ENCODE measurements at regions of chr10 and their contacts with region 1.

Region 1: GRCh38 chr10:87861953-87862678 is 1.2 kb downstream of the KLLN start:
- DNase-seq: peak; percentile 85 to 97 (median 91)
- ATAC-seq: peak; percentile 67 to 73 (median 68)
- H3K4me3 ChIP-seq: peak overlapping the region; percentile 71 to 97
- H3K4me3 Mint-ChIP-seq: peak overlapping the region; percentile 94 to 97 (median 95)
- H3K27ac ChIP-seq: peak overlapping the region; percentile 87
- H3K27ac Mint-ChIP-seq: peak overlapping the region; percentile 92 to 95
- H3K4me1 ChIP-seq: peaks cover 11 to 17% of the 10 kb centered on the region in 2 experiments
- H3K4me1 Mint-ChIP-seq: peaks cover 33 to 58% (median 35%) of the 10 kb centered on the region in 3 donors
- H3K27me3 ChIP-seq: no peaks in the 10 kb centered on the region
- H3K27me3 Mint-ChIP-seq: no peaks in the 10 kb centered on the region

Region 2: GRCh38 chr10:87646939-87647338 is 215.2 kb before region 1 on chr10:
- CTCF ChIA-PET with region 1: no interaction called
- POLR2A ChIA-PET with region 1: no interaction called
- DNase-seq: no peak
- ATAC-seq: no peak
- H3K4me3 ChIP-seq: no peak overlapping the region
- H3K4me3 Mint-ChIP-seq: no peak overlapping the region
- H3K27ac ChIP-seq: no peak overlapping the region
- H3K27ac Mint-ChIP-seq: no peak overlapping the region
- H3K4me1 ChIP-seq: no peaks in the 10 kb centered on the region
- H3K4me1 Mint-ChIP-seq: no peaks in the 10 kb centered on the region
- H3K27me3 ChIP-seq: no peaks in the 10 kb centered on the region
- H3K27me3 Mint-ChIP-seq: peaks cover 9 to 11% of the 10 kb centered on the region in 2 donors

Region 3: DNA sequence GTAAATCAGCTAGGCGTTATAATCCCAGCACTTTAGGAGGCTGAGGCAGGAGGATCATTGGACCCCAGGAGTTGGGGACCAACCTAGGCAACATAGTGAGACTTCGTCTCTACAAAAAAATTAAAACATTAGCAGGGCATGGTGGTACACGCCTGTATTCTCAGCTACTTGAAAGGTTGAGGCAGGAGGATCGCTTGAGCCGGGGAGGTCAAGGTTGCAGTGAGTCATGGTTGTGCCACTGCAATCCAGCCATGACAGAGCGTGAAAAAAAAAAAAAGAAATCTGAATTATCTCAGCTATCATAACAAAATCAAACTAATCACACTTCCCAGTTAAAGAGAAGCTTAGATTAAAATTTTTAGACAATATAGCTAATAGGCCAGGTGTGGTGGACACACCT is 79.4 kb before region 1 on chr10:
- CTCF ChIA-PET with region 1: no interaction called
- POLR2A ChIA-PET with region 1: interaction called in 1 of 2 experiments, 10 read pairs
- DNase-seq: no peak
- ATAC-seq: no peak
- H3K4me3 ChIP-seq: no peak overlapping the region
- H3K4me3 Mint-ChIP-seq: no peak overlapping the region
- H3K27ac ChIP-seq: no peak overlapping the region
- H3K27ac Mint-ChIP-seq: no peak overlapping the region
- H3K4me1 ChIP-seq: no peaks in the 10 kb centered on the region
- H3K4me1 Mint-ChIP-seq: peaks cover 16 to 19% (median 17%) of the 10 kb centered on the region in 3 donors
- H3K27me3 ChIP-seq: no peaks in the 10 kb centered on the region
- H3K27me3 Mint-ChIP-seq: no peaks in the 10 kb centered on the region

Region 4: GRCh38 chr10:87850742-87851205 is 11.3 kb before region 1 on chr10:
- CTCF ChIA-PET with region 1: interaction called, 7 to 19 read pairs
- POLR2A ChIA-PET with region 1: no interaction called
- DNase-seq: peak; percentile 10 to 76 (median 38)
- ATAC-seq: peak; percentile 77 to 98 (median 90)
- H3K4me3 ChIP-seq: no peak overlapping the region
- H3K4me3 Mint-ChIP-seq: no peak overlapping the region
- H3K27ac ChIP-seq: no peak overlapping the region
- H3K27ac Mint-ChIP-seq: no peak overlapping the region
- H3K4me1 ChIP-seq: peaks cover 2 to 5% of the 10 kb centered on the region in 2 experiments
- H3K4me1 Mint-ChIP-seq: peaks cover 0 to 13% (median 8%) of the 10 kb centered on the region in 3 donors
- H3K27me3 ChIP-seq: no peaks in the 10 kb centered on the region
- H3K27me3 Mint-ChIP-seq: no peaks in the 10 kb centered on the region

Region 5: GRCh38 chr10:87875929-87876571 is 13.9 kb after region 1 on chr10:
- CTCF ChIA-PET with region 1: interaction called in 1 of 2 experiments, 3 read pairs
- POLR2A ChIA-PET with region 1: interaction called, 3 to 13 read pairs
- DNase-seq: no peak
- ATAC-seq: no peak
- H3K4me3 ChIP-seq: no peak overlapping the region
- H3K4me3 Mint-ChIP-seq: no peak overlapping the region
- H3K27ac ChIP-seq: no peak overlapping the region
- H3K27ac Mint-ChIP-seq: no peak overlapping the region
- H3K4me1 ChIP-seq: peaks cover 9 to 27% of the 10 kb centered on the region in 2 experiments
- H3K4me1 Mint-ChIP-seq: peaks cover 56 to 71% (median 67%) of the 10 kb centered on the region in 3 donors
- H3K27me3 ChIP-seq: no peaks in the 10 kb centered on the region
- H3K27me3 Mint-ChIP-seq: no peaks in the 10 kb centered on the region

Region 6: DNA sequence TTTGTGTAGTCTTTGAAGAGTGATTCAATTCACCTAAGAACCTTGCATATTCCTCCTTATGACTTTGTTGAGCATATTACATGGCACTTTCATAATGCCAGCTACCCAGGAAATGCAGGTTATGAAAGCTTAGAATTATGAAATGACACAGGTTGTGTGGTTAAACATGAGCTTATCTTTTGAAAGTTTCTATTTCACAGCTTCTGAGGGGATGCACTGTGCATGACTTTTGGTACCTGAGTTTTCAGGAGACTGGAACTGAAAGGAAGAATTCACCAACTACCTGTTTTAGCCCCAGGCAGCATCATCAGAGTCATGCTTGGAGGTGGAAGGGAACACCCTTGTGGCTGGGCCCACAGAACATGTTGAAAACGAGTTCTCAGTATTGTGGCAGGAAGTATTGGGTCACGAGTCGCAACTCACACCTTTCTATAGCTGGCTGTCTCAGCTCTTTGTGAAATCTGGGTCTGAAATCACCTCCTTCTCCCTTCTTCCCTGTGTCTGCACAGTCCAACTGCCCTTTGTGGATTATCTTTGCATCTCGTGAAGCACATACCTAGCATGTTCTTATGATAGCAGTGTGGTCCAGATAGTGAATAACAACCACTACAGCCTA is 229.5 kb after region 1 on chr10:
- CTCF ChIA-PET with region 1: interaction called, 3 to 10 read pairs
- POLR2A ChIA-PET with region 1: interaction called in 1 of 2 experiments, 5 read pairs
- DNase-seq: peak; percentile 36 to 83 (median 68)
- ATAC-seq: peak; percentile 97 to 99 (median 98)
- H3K4me3 ChIP-seq: no peak overlapping the region
- H3K4me3 Mint-ChIP-seq: peak overlapping the region in 1 of 3 donors; percentile 57
- H3K27ac ChIP-seq: peak overlapping the region; percentile 74
- H3K27ac Mint-ChIP-seq: peak overlapping the region; percentile 92 to 95
- H3K4me1 ChIP-seq: peaks cover 24 to 32% of the 10 kb centered on the region in 2 experiments
- H3K4me1 Mint-ChIP-seq: peaks cover 44 to 53% (median 49%) of the 10 kb centered on the region in 3 donors
- H3K27me3 ChIP-seq: no peaks in the 10 kb centered on the region
- H3K27me3 Mint-ChIP-seq: no peaks in the 10 kb centered on the region

Region 7: DNA sequence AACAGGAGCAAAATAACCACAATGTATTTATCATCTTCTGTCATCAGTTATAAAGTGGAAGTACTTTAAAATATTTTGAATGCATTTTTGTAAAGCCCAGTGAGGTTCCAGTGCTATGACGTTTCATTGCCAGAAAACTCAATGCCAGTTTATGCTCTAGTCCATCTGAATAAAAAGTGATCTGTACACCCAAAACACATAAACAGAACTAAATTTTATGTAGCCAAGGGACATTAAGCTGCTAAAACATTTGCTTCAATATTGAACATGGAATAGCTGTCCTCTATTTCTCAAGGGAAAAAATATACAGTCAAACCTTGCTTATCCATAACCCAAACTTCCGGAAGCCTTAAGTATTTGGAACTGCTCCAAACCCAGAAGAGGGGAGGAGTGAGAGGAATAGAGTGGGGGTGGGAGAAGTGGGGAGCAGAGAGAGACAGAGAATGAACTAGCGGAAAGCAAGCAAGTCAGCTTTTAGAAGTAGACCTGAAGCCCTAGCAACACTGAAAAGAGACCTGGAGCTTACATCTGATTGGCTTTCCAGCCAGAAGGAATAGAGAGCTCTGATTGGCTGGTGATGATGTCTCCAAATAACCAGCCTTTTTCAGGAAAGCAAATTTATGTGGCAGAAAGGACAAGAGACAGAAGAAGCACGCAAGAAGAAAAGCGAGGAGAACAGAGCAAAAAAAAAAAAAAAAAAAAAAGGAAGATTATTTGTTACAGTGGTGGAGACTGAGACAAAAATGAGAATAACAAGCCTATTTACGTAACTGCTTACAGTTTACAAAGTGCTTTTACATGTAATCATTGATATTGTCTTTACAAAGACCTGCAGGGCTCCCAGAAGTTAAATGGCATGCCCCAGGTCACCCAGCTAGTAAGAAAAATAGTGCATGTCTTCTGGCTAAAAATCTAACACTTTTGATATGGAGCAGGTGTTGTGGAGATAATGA is 525.0 kb after region 1 on chr10:
- CTCF ChIA-PET with region 1: interaction called, 4 to 24 read pairs
- POLR2A ChIA-PET with region 1: interaction called, 4 to 5 read pairs
- DNase-seq: peak in 9 of 35 experiments; percentile 2 to 53 (median 10)
- ATAC-seq: peak in 3 of 4 experiments; percentile 18 to 51 (median 44)
- H3K4me3 ChIP-seq: peak overlapping the region in 1 of 2 donors; percentile 15
- H3K4me3 Mint-ChIP-seq: no peak overlapping the region
- H3K27ac ChIP-seq: peak overlapping the region; percentile 96
- H3K27ac Mint-ChIP-seq: no peak overlapping the region
- H3K4me1 ChIP-seq: peaks cover 34 to 73% of the 10 kb centered on the region in 2 experiments
- H3K4me1 Mint-ChIP-seq: peaks cover 16 to 30% (median 30%) of the 10 kb centered on the region in 3 donors
- H3K27me3 ChIP-seq: no peaks in the 10 kb centered on the region
- H3K27me3 Mint-ChIP-seq: no peaks in the 10 kb centered on the region

Region 8: DNA sequence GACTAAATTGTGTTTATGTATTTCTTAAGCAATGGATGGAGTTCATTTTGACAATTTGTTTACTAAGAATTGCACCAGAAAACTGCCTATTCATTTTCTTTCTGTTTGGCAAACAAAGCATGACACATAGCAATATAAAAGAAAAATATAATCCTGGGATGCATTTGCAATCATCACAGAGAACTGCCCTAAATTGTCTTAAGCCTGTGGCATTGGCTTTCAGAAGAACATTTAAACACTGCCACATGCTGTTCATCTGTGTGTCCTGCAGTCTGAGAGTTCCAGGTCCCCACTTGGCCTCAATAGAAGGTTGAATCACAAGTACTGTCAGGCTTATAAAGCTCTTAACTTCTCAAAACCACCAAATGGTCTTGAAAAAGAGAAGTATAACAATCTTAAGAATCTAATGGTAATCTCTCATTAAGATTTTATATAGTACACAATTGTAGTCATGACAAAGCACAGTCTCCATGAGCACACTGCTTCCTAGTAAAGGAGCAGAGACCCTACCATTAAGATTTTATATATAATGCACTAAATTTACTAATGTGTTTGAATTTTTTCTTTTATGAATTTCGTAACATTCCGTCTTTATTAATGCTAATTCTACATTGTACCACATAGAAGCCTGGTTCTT is 691.1 kb after region 1 on chr10:
- CTCF ChIA-PET with region 1: interaction called, 4 to 14 read pairs
- POLR2A ChIA-PET with region 1: no interaction called
- DNase-seq: peak in 30 of 35 experiments; percentile 2 to 71 (median 17)
- ATAC-seq: peak; percentile 72 to 85 (median 78)
- H3K4me3 ChIP-seq: no peak overlapping the region
- H3K4me3 Mint-ChIP-seq: no peak overlapping the region
- H3K27ac ChIP-seq: no peak overlapping the region
- H3K27ac Mint-ChIP-seq: no peak overlapping the region
- H3K4me1 ChIP-seq: no peaks in the 10 kb centered on the region
- H3K4me1 Mint-ChIP-seq: no peaks in the 10 kb centered on the region
- H3K27me3 ChIP-seq: no peaks in the 10 kb centered on the region
- H3K27me3 Mint-ChIP-seq: no peaks in the 10 kb centered on the region